ENCODE measurements at regions of chr21 and their contacts with region 1.

Region 1: GRCh38 chr21:31731802-31732596 is at the start of gene SCAF4:
- DNase-seq: peak; percentile 49 to 84
- H3K4me3 ChIP-seq: peak within 1 kb of the TSS; percentile 82 to 99 (median 90)
- H3K27ac ChIP-seq: peak within 1 kb of the TSS; percentile 97
- H3K4me1 ChIP-seq: peaks cover 12 to 17% (median 14%) of the 10 kb centered on the region in 4 experiments
- H3K27me3 ChIP-seq: no peaks in the 10 kb centered on the region
- CTCF ChIP-seq: no peak
- EP300 ChIP-seq: no peak; a peak in 1 of 3 replicates
- POLR2A ChIP-seq: peak; percentile 92 to 95
- RAD21 ChIP-seq: no peak
- total RNA-seq, gene SCAF4: 55.1 and 56.8 TPM in 2 replicates

Region 2: DNA sequence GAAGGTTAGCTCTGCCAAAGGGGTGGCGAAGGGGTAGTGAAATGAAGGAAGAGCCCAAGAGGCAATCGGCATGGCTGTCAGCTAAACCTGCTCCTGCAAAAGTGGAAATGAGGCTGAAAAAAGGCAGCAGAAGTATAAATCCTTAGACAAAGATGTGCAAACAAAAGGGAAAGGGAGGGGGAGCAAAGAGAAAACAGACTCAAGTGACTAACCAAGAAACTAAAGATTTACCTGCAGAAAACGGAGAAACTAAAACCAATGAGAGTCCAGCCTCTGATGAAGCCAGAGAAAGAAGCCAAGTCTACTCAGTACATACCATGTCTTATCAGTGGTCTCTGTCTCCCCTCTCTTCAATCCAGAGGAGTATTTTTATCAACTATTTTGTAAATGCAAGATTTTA is 25.4 kb before region 1 on chr21:
- CTCF ChIA-PET with region 1: no interaction called
- POLR2A ChIA-PET with region 1: interaction called, 17 read pairs
- DNase-seq: no peak
- H3K4me3 ChIP-seq: no peak overlapping the region
- H3K27ac ChIP-seq: no peak overlapping the region
- H3K4me1 ChIP-seq: peaks cover 0 to 8% (median under 1%) of the 10 kb centered on the region in 4 experiments; a peak in 5 of 7 replicates
- H3K27me3 ChIP-seq: no peaks in the 10 kb centered on the region
- CTCF ChIP-seq: no peak
- EP300 ChIP-seq: no peak
- POLR2A ChIP-seq: no peak
- RAD21 ChIP-seq: no peak

Region 3: GRCh38 chr21:31713973-31714740 is 17.8 kb before region 1 on chr21:
- CTCF ChIA-PET with region 1: no interaction called
- POLR2A ChIA-PET with region 1: interaction called, 16 read pairs
- DNase-seq: no peak
- H3K4me3 ChIP-seq: no peak overlapping the region
- H3K27ac ChIP-seq: no peak overlapping the region
- H3K4me1 ChIP-seq: peaks cover 0 to 17% (median 5%) of the 10 kb centered on the region in 4 experiments; a peak in 3 of 7 replicates
- H3K27me3 ChIP-seq: no peaks in the 10 kb centered on the region
- CTCF ChIP-seq: no peak
- EP300 ChIP-seq: no peak
- POLR2A ChIP-seq: no peak
- RAD21 ChIP-seq: no peak

Region 4: GRCh38 chr21:31721381-31721780 is 10.6 kb before region 1 on chr21:
- CTCF ChIA-PET with region 1: interaction called, 4 read pairs
- POLR2A ChIA-PET with region 1: interaction called, 16 read pairs
- DNase-seq: no peak
- H3K4me3 ChIP-seq: no peak overlapping the region
- H3K27ac ChIP-seq: no peak overlapping the region
- H3K4me1 ChIP-seq: peaks cover 0 to 6% (median 1%) of the 10 kb centered on the region in 4 experiments; a peak in 3 of 7 replicates
- H3K27me3 ChIP-seq: no peaks in the 10 kb centered on the region
- CTCF ChIP-seq: no peak
- EP300 ChIP-seq: no peak
- POLR2A ChIP-seq: no peak
- RAD21 ChIP-seq: no peak

Measured in H1 (cell line).